Activated CD4-positive, alpha-beta T cell treated with anti-CD3 and anti-CD28 coated beads for 36 hours (primary cell): ENCODE measurements at regions of chr1 and their contacts with region 1.

Region 1: GRCh38 chr1:171715813-171716251 is 26.0 kb downstream of the VAMP4 start:
- DNase-seq: no peak
- ATAC-seq: no peak
- H3K4me3 Mint-ChIP-seq: no peak overlapping the region
- H3K27ac Mint-ChIP-seq: no peak overlapping the region
- H3K4me1 Mint-ChIP-seq: peaks cover 3% of the 10 kb centered on the region
- H3K27me3 Mint-ChIP-seq: no peaks in the 10 kb centered on the region

Region 2: GRCh38 chr1:171610385-171610784 is 105.4 kb before region 1 on chr1:
- CTCF ChIA-PET with region 1: no interaction called
- POLR2A ChIA-PET with region 1: no interaction called
- intact Hi-C with region 1: no loop called
- DNase-seq: no peak
- ATAC-seq: no peak
- H3K4me3 Mint-ChIP-seq: no peak overlapping the region
- H3K27ac Mint-ChIP-seq: no peak overlapping the region
- H3K4me1 Mint-ChIP-seq: no peaks in the 10 kb centered on the region
- H3K27me3 Mint-ChIP-seq: no peaks in the 10 kb centered on the region

Region 3: GRCh38 chr1:171654942-171655745 is 60.7 kb before region 1 on chr1:
- CTCF ChIA-PET with region 1: interaction called, 12 read pairs
- POLR2A ChIA-PET with region 1: no interaction called
- intact Hi-C with region 1: loop called (anchors 2 to 10 kb)
- DNase-seq: peak; percentile 90
- ATAC-seq: peak; percentile 93
- H3K4me3 Mint-ChIP-seq: no peak overlapping the region
- H3K27ac Mint-ChIP-seq: no peak overlapping the region
- H3K4me1 Mint-ChIP-seq: peaks cover 8% of the 10 kb centered on the region
- H3K27me3 Mint-ChIP-seq: peaks cover 9% of the 10 kb centered on the region

Region 4: DNA sequence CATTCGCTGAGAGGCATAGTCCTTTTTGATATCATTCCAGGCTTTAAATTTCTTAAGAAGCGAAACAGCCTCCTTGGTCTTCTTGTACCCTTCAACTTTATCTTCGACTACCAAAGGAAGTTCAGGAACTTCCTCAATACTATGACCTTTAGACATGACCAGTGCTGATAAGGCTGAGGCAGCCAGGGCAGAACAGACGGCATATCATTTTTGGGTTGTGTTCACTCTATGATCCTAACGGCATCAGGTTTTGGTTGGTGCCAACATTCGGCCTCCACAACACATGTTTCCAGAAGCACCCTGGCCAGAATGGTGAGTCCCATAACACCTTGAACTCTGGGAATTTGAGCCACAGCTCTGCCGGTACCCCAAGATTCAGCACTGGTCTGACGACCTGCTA is 32.0 kb before region 1 on chr1:
- CTCF ChIA-PET with region 1: no interaction called
- POLR2A ChIA-PET with region 1: no interaction called
- intact Hi-C with region 1: no loop called
- DNase-seq: no peak
- ATAC-seq: no peak
- H3K4me3 Mint-ChIP-seq: no peak overlapping the region
- H3K27ac Mint-ChIP-seq: no peak overlapping the region
- H3K4me1 Mint-ChIP-seq: no peaks in the 10 kb centered on the region
- H3K27me3 Mint-ChIP-seq: peaks cover 4% of the 10 kb centered on the region

Region 5: GRCh38 chr1:172431721-172432192 is 715.9 kb after region 1 on chr1:
- CTCF ChIA-PET with region 1: no interaction called
- POLR2A ChIA-PET with region 1: no interaction called
- intact Hi-C with region 1: no loop called
- DNase-seq: peak; percentile 40
- ATAC-seq: no peak
- H3K4me3 Mint-ChIP-seq: no peak overlapping the region
- H3K27ac Mint-ChIP-seq: peak overlapping the region; percentile 28
- H3K4me1 Mint-ChIP-seq: peaks cover 30% of the 10 kb centered on the region
- H3K27me3 Mint-ChIP-seq: no peaks in the 10 kb centered on the region